Right cardiac atrium (tissue), 5 donors: ENCODE measurements at regions of chr4 and their contacts with region 1.

Region 1: DNA sequence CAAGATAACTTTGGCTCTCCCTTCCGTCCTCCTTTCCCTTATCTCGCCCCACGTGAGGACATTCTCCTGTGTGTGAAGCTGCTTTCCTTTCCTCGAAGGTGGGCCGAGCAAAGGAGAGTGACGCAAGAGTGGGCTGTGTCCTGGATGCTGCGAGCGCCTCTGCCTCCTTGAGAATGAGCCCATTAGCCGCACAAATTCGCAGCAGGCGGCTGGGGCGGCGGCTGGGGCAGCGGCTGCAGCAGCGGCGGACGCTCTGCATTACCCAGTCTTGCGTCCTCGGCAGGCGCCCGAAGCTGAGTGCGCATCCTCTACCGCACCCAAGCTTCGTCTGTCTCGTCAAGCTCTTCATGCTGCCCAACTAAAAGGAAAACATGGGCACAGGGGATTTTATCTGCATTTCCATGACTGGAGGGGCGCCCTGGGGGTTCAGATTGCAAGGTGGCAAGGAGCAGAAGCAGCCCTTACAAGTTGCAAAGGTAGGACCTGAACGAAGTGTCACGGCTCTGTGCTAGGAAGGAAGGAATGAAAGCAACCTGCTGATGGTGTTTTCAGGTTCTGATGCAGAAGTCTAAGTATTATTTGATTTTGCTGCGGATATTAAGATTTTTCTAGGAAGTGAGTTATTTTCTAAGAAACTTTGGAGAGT is at the start of gene SYNPO2:
- DNase-seq: peak; percentile 87 to 95 (median 93)
- ATAC-seq: peak; percentile 96
- H3K4me3 ChIP-seq: peak within 1 kb of the TSS; percentile 94
- H3K27ac ChIP-seq: peak within 1 kb of the TSS; percentile 93
- H3K4me1 ChIP-seq: no peaks in the 10 kb centered on the region
- H3K27me3 ChIP-seq: no peaks in the 10 kb centered on the region
- total RNA-seq, gene SYNPO2: 111 to 134 (median 118) TPM

Region 2: DNA sequence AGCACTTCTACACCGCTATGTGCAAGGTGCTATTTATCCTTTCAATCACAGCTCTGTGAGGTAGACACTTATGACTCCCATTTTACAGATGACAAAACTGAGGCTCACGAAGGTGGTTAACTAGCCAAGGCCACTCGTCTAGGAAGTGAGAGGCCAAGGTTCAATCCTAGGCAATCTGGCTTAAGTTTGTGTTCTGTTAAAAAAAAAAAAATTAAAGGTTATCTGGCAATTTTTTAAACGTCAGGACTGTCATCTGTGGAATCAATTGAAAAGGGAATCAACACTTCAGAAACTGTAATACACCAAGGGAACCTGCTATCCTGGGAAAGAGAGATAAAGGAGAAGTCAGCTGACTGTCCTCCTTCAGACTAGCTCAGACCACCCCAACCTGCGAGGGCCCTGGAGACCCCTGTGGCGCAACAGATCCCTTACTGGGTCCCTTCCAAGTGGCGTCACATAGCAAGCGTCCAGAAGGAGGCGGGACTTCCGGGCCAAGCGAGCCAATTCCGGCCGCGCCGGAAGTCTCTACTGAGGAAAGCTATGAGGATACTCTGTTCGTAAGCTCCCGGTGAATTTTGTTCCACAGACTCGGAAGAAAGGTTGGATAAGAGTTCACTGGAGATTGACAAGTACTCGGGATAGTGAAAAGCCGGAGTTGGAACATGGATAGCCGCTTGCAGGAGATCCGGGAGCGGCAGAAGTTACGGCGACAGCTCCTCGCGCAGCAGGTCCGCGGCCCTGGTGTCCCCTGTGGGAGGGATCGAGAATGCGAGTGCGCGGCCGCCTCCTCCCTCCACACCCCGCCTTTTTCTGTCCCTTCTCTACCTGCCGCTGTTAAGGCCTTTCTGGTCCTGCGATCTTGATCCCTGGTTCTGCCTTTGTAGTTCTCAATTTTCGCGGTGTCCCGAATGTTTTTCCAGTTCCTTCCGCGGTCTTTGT is 203.6 kb before region 1 on chr4 and contains the start of gene METTL14:
- intact Hi-C with region 1: no loop called
- DNase-seq: peak; percentile 92 to 97 (median 96)
- ATAC-seq: peak; percentile 98 to 99
- H3K4me3 ChIP-seq: peak within 1 kb of the TSS; percentile 76
- H3K27ac ChIP-seq: peak within 1 kb of the TSS; percentile 87
- H3K4me1 ChIP-seq: no peaks in the 10 kb centered on the region
- H3K27me3 ChIP-seq: no peaks in the 10 kb centered on the region
- total RNA-seq, gene METTL14: 31.7 to 38.9 (median 34.5) TPM

Region 3: GRCh38 chr4:118729287-118730286 is 159.2 kb before region 1 on chr4:
- intact Hi-C with region 1: loop called in 1 of 4 experiments (anchors 10 kb)
- DNase-seq: no peak
- ATAC-seq: no peak
- H3K4me3 ChIP-seq: no peak overlapping the region
- H3K27ac ChIP-seq: no peak overlapping the region
- H3K4me1 ChIP-seq: no peaks in the 10 kb centered on the region
- H3K27me3 ChIP-seq: no peaks in the 10 kb centered on the region

Region 4: GRCh38 chr4:118740869-118741268 is 147.9 kb before region 1 on chr4:
- intact Hi-C with region 1: loop called in 3 of 4 experiments (anchors 5 to 10 kb)
- DNase-seq: no peak
- ATAC-seq: no peak
- H3K4me3 ChIP-seq: peak overlapping the region; percentile 29
- H3K27ac ChIP-seq: no peak overlapping the region
- H3K4me1 ChIP-seq: peaks cover 1% of the 10 kb centered on the region
- H3K27me3 ChIP-seq: no peaks in the 10 kb centered on the region

Region 5: GRCh38 chr4:118765399-118765798 is 123.4 kb before region 1 on chr4:
- intact Hi-C with region 1: loop called in 3 of 4 experiments (anchors 5 to 10 kb)
- DNase-seq: no peak
- ATAC-seq: peak; percentile 86 to 94
- H3K4me3 ChIP-seq: no peak overlapping the region
- H3K27ac ChIP-seq: no peak overlapping the region
- H3K4me1 ChIP-seq: peaks cover 5% of the 10 kb centered on the region
- H3K27me3 ChIP-seq: no peaks in the 10 kb centered on the region

Region 6: GRCh38 chr4:118772081-118772766 is 116.6 kb before region 1 on chr4:
- intact Hi-C with region 1: loop called in 3 of 4 experiments (anchors 5 to 10 kb)
- DNase-seq: no peak
- ATAC-seq: peak; percentile 81 to 82
- H3K4me3 ChIP-seq: no peak overlapping the region
- H3K27ac ChIP-seq: peak overlapping the region; percentile 39
- H3K4me1 ChIP-seq: peaks cover 6% of the 10 kb centered on the region
- H3K27me3 ChIP-seq: no peaks in the 10 kb centered on the region

Region 7: DNA sequence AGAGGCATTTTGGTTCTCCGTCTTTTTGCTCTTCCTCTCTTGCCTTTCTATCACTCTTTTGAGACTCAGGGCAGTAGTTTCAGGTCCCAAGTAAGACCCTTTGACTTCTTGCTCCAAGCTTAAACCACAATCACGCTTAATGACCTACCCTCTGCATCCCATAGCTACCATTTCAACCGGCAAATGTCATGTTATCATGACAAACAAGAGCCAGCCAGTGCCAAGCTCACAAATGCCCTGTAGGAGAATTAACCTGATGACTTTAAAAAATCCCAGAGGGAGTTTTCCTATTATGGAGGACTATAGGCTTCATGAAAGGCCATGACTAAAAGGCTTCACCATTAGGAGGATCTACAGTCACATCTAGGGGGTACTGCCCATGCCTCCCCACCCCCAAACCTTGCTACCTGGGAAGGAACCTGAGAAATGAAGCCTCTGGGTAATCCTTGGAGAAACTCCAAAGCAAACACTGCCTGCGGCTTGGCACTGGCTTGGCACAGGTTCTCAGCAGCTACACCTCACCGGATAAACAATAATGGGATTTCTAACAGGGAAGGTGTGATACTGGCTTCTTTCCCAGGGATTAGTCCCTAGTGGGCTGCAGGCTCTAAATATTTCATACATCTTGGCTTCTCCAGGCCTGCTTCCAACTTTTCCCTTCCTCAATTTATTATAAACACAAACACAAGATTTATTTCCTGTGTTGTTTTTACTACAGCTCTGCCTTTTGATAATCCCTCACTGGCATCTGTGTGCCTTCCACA is 65.5 kb before region 1 on chr4:
- intact Hi-C with region 1: no loop called
- DNase-seq: no peak
- ATAC-seq: no peak
- H3K4me3 ChIP-seq: no peak overlapping the region
- H3K27ac ChIP-seq: no peak overlapping the region
- H3K4me1 ChIP-seq: peaks cover 6% of the 10 kb centered on the region
- H3K27me3 ChIP-seq: no peaks in the 10 kb centered on the region

Region 8: DNA sequence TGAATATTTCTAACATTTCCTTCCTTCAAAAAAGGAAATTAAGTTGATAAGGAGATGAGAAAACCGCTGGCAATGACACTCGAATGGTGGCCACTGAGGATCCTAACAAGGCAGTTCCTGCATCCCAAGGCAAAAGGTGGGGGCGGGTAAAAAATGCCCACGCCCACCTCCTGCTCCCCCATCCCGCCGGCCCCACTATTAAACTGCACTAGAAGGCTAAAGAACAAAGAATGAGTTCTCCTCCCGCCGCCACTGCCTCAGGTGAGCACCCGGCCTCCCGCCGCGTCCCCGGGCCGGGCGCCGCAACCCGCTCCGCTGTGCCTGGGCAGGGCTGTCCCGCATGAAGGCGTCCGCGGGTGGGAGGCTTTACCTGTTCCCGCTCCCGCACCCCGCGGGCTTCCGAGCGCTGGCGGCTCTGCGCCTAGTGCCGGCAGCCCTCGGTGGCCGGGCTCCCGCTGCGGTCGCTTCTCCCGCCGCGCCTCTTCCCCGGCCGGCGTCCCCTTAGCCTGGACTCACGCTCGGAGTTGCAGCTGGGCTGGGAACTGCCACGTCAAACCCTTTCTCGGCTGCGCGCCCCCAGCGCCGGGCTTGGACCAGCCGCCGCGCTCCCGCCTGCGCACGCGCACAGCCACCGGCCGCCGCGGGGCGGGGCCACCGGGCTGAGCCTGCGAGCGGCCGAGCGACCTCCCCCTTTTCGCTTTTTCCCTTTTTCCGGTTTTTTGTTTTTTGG is 53.1 kb before region 1 on chr4 and contains the start of gene SEC24D:
- intact Hi-C with region 1: loop called in 1 of 4 experiments (anchors 10 kb)
- DNase-seq: peak; percentile 91 to 97 (median 96)
- ATAC-seq: peak; percentile 95 to 96
- H3K4me3 ChIP-seq: peak within 1 kb of the TSS; percentile 100
- H3K27ac ChIP-seq: peak within 1 kb of the TSS; percentile 99
- H3K4me1 ChIP-seq: peaks cover 2% of the 10 kb centered on the region
- H3K27me3 ChIP-seq: no peaks in the 10 kb centered on the region
- total RNA-seq, gene SEC24D: 13.8 to 37.1 (median 20.9) TPM

Region 9: DNA sequence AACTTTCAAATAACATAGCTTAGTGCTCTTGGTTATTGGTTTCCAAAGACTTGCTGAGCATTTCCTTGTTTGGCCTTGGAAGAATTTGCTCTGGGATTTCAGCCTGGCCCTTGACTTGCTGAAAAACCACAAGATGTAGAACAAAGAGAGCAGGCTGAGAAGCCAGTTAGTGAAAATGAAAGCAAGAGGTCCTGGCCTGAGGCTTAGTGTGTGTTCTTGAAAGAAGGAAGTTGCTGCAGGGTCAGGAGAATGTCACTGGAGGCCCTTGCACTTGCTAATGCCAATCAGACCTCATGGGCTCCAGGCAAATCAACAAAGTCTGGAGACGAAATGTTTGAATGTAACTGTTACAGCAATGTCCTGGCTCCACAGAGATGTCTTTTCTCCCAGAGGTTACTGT is 79.2 kb after region 1 on chr4:
- intact Hi-C with region 1: loop called in 3 of 4 experiments (anchors 5 kb)
- DNase-seq: peak; percentile 41 to 72 (median 47)
- ATAC-seq: peak; percentile 85 to 90
- H3K4me3 ChIP-seq: no peak overlapping the region
- H3K27ac ChIP-seq: peak overlapping the region; percentile 80
- H3K4me1 ChIP-seq: peaks cover 8% of the 10 kb centered on the region
- H3K27me3 ChIP-seq: no peaks in the 10 kb centered on the region